GM12878 (cell line): ENCODE measurements at regions of chr2 and their contacts with region 1.

Region 1: GRCh38 chr2:224520064-224520463 is 65.1 kb downstream of the CUL3 start:
- DNase-seq: peak; percentile 86
- ATAC-seq: peak; percentile 78
- H3K4me3 ChIP-seq: no peak overlapping the region; the same call in 1 of the 2 replicates
- H3K27ac ChIP-seq: peak overlapping the region; percentile 88
- H3K4me1 ChIP-seq: peaks cover 52% of the 10 kb centered on the region
- H3K27me3 ChIP-seq: no peaks in the 10 kb centered on the region
- CTCF ChIP-seq: no peak
- EP300 ChIP-seq: peak; percentile 74 to 84; a peak in 3 of 4 replicates
- POLR2A ChIP-seq: no peak
- RAD21 ChIP-seq: 0 out of 2 replicates have a peak, but pooled peaks have one; percentile 2

Region 2: DNA sequence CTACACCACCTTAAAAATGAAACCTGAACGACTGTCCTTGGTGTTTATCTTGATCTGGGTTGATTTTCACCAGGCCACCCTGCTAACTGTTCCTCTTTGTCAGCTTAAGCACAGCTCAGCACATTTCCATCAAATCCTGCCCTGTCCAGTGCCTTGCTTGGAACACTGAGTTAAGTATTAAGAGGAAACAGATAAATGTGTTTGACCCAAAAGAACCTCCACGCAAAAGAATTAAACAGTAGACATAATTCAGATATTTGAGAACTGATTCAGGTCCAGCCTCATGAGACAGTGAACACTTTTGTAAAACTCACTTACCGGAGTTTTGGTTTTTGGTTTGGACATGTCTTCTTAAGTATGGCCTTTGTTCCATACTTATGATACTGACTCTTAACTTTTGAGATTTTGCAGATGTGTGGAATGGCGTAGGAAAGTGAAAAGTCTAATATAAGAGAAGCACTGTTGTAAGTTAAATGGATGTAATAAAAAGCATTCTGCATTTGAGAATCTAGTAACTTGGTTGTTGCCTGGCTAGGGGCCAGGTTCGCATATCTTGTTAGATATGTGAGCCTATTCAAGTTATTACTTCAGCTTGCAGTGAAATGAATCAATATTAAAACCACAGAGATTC is 392.1 kb before region 1 on chr2:
- CTCF ChIA-PET with region 1: no interaction called
- POLR2A ChIA-PET with region 1: no interaction called
- RAD21 ChIA-PET with region 1: no interaction called
- SMC1A ChIA-PET with region 1: no interaction called
- in situ Hi-C with region 1: no loop called
- intact Hi-C with region 1: no loop called
- DNase-seq: no peak
- ATAC-seq: no peak
- H3K4me3 ChIP-seq: no peak overlapping the region
- H3K27ac ChIP-seq: no peak overlapping the region
- H3K4me1 ChIP-seq: no peaks in the 10 kb centered on the region
- H3K27me3 ChIP-seq: no peaks in the 10 kb centered on the region
- CTCF ChIP-seq: no peak
- EP300 ChIP-seq: no peak
- POLR2A ChIP-seq: no peak
- RAD21 ChIP-seq: no peak

Region 3: DNA sequence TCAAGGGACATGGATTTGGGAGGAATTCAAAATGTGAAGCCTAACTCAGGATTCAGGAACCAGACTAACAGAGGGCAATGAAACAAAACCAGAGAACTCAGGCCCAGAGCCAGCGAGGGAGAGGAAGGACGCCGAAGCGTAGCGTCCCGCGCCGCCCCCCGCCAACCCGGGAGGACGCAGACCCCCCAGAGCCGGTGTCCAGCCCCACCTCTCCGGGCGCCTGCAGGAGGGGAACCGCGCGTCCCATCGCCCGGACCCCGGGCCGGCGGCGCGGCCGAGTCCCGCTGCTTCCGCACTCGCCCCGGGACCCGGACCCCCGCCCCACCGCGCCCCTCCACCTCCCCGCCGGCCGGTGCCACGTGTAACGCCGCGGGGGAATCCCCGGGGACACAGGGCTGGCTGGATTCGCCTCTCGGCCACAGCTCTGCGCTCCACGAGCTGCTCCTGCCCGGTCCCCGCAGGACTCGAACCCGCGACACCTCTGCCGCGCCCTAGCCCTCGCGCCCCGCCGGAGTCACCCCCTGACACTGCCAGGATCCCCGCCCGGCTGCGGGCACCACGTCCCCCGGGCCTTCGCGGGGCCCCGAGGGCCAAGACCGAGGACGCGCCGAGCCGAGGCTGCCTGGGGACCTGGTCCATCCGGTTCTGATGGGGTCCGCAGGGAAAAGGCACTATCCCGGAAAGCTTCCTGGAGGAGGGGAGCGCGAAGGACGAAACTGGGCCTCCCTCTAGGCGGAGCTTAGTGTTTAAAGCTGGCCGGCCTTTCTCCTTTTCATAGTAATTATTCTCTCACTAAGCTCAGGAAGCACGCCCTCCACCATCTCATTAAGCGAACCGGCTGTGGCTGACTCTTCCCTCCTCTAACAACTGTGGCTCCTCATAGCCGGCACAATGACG is 77.7 kb before region 1 on chr2:
- CTCF ChIA-PET with region 1: no interaction called
- POLR2A ChIA-PET with region 1: no interaction called
- RAD21 ChIA-PET with region 1: no interaction called
- SMC1A ChIA-PET with region 1: no interaction called
- in situ Hi-C with region 1: no loop called
- intact Hi-C with region 1: no loop called
- DNase-seq: no peak
- ATAC-seq: peak; percentile 65
- H3K4me3 ChIP-seq: peak overlapping the region; percentile 45; the same call in 1 of the 2 replicates
- H3K27ac ChIP-seq: no peak overlapping the region
- H3K4me1 ChIP-seq: no peaks in the 10 kb centered on the region; the same call in 1 of the 2 replicates
- H3K27me3 ChIP-seq: peaks cover 2 to 7% of the 10 kb centered on the region in 2 experiments; a peak in 3 of 4 replicates
- CTCF ChIP-seq: no peak
- EP300 ChIP-seq: no peak
- POLR2A ChIP-seq: no peak
- RAD21 ChIP-seq: no peak

Region 4: DNA sequence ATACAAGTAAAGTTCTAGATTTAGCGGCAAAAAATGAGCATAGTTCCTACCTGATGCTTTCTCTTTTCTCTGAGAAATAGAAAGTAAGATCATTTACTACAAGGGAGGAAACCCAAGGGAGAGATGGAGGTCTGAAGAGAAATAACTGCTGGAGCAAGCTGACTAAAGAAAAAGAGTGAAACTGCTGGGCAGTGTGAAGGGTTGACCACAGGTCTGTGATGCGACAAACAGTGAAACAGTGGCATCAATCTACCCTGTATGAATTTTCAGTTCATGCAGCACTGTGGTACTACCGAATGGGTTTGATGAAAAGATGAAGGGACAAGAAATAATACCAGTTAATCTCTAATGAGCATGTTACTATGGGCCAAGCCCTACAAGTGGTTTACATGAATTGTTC is 12.9 kb after region 1 on chr2:
- CTCF ChIA-PET with region 1: interaction called, 4 read pairs
- POLR2A ChIA-PET with region 1: interaction called, 4 read pairs
- RAD21 ChIA-PET with region 1: interaction called, 4 read pairs
- SMC1A ChIA-PET with region 1: interaction called, 13 read pairs
- in situ Hi-C with region 1: no loop called
- intact Hi-C with region 1: no loop called
- DNase-seq: no peak
- ATAC-seq: peak; percentile 77
- H3K4me3 ChIP-seq: no peak overlapping the region
- H3K27ac ChIP-seq: no peak overlapping the region
- H3K4me1 ChIP-seq: peaks cover 6% of the 10 kb centered on the region
- H3K27me3 ChIP-seq: no peaks in the 10 kb centered on the region
- CTCF ChIP-seq: no peak
- EP300 ChIP-seq: no peak
- POLR2A ChIP-seq: no peak
- RAD21 ChIP-seq: no peak

Region 5: DNA sequence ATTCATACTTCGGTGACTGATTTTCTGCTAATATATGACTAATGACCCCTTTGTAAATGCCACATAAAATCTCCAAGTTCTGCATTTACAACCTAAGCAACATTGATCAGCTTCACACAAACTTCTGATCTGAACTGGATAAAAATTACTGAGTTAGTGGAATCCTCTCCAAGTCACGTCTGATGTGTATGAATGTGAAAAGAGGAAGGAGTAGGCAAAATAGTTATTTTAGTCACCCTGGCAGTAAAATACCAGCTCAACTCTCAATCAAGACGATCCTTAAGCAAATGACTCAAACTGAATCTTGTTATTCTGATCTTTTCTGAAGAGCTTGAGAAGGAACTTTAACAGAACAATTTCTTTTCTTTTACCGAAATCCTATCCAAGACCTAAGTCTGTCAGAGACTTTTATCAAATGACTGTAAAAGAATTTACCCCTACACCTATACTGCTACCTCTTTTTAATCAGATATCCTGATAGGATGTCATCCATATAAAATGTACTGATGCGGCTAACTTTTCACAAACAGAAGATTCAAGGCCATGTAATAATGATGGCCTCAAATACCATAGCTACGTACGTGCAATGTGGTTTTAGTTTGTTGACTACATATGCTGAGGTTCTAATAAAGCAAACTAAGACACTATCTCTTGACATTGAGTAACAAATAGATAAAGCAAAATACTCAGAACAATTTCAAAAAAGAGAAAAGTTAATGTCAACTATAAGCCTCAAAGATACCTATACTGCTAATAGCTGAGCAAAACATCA is 41.4 kb after region 1 on chr2:
- CTCF ChIA-PET with region 1: no interaction called
- POLR2A ChIA-PET with region 1: interaction called, 6 read pairs
- RAD21 ChIA-PET with region 1: interaction called, 6 read pairs
- SMC1A ChIA-PET with region 1: interaction called, 16 read pairs
- in situ Hi-C with region 1: loop called (anchors 5 kb)
- intact Hi-C with region 1: no loop called
- DNase-seq: peak; percentile 50
- ATAC-seq: peak; percentile 85
- H3K4me3 ChIP-seq: peak overlapping the region; percentile 29
- H3K27ac ChIP-seq: peak overlapping the region; percentile 13
- H3K4me1 ChIP-seq: peaks cover 12% of the 10 kb centered on the region
- H3K27me3 ChIP-seq: no peaks in the 10 kb centered on the region
- CTCF ChIP-seq: no peak
- EP300 ChIP-seq: no peak
- POLR2A ChIP-seq: no peak
- RAD21 ChIP-seq: no peak

Region 6: GRCh38 chr2:224576088-224576715 is 56.1 kb after region 1 on chr2:
- CTCF ChIA-PET with region 1: interaction called, 9 read pairs
- POLR2A ChIA-PET with region 1: interaction called, 49 read pairs
- RAD21 ChIA-PET with region 1: interaction called, 94 read pairs
- SMC1A ChIA-PET with region 1: interaction called, 219 read pairs
- in situ Hi-C with region 1: no loop called
- intact Hi-C with region 1: loop called (anchors 2 kb)
- DNase-seq: peak; percentile 43
- ATAC-seq: peak; percentile 68
- H3K4me3 ChIP-seq: peak overlapping the region; percentile 53
- H3K27ac ChIP-seq: peak overlapping the region; percentile 8
- H3K4me1 ChIP-seq: peaks cover 22% of the 10 kb centered on the region
- H3K27me3 ChIP-seq: no peaks in the 10 kb centered on the region
- CTCF ChIP-seq: no peak
- EP300 ChIP-seq: no peak
- POLR2A ChIP-seq: no peak
- RAD21 ChIP-seq: no peak

Region 7: GRCh38 chr2:224638301-224638823 is 118.3 kb after region 1 on chr2:
- CTCF ChIA-PET with region 1: interaction called, 3 read pairs
- POLR2A ChIA-PET with region 1: interaction called, 3 read pairs
- RAD21 ChIA-PET with region 1: interaction called, 8 read pairs
- SMC1A ChIA-PET with region 1: interaction called, 4 read pairs
- in situ Hi-C with region 1: no loop called
- intact Hi-C with region 1: loop called (anchors 5 kb)
- DNase-seq: peak; percentile 55
- ATAC-seq: peak; percentile 93
- H3K4me3 ChIP-seq: no peak overlapping the region
- H3K27ac ChIP-seq: peak overlapping the region; percentile 32; the same call in 1 of the 2 replicates
- H3K4me1 ChIP-seq: peaks cover 4% of the 10 kb centered on the region; the same call in 1 of the 2 replicates
- H3K27me3 ChIP-seq: no peaks in the 10 kb centered on the region
- CTCF ChIP-seq: no peak
- EP300 ChIP-seq: 0 out of 4 replicates have a peak, but pooled peaks of 1 of the 2 experiments have one; percentile 28
- POLR2A ChIP-seq: no peak
- RAD21 ChIP-seq: no peak